Posterior vena cava (tissue), 2 donors: ENCODE measurements at regions of chr4 and their contacts with region 1.

Region 1: DNA sequence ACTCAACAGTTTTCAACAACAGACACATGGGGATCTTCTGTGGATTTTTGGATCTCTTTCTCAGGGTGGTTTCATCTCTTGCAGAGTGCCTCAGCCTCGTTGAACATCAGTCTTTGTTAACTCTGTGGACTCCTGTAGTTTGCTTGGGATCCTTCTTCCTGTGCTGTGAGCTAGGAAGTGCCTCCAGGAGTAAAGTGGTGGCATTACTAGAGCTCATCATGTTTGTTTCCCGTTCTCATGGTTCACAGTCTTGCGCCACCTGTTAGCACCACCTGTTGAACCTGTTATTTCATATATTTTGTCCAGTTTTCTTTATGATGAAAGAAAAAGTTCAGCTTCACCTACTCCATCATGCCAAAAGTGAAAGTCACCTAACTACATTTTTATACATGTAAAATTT is 27.5 kb upstream of the NDUFC1 start:
- DNase-seq: no peak

Region 2: DNA sequence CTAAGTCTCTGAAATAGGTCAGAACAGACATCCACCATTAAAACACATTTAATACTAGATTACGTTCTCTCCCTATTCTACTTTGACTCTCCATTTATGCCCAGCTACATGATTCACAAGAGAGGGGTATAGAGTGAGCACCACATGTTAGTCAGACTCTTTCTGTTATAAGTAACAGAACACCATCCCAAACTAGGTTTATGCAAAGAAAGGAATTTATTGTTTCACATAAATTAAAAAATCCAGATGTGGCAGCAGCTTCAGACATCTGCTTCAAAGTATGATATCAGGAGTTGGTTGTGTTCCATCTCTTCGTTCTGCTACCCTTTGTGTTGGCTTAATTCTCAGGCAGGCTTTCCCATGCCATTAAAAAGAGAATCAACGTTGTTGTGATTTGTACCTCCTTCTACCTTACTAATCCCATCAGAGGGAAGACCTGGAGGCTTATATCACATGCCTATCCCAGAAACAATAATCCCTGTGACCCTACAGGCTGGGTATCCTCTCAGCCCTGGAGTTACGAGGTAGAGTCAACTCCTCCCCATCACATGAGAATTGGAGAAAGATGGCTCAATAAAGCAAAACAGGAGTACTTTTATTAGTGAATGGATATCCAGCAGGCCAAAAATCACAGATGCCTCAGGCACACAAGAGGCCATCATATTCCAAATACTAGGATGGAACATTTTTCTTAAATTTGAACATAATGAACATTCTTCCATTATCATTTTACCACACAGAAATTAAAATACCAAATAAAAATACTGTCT is 1250.8 kb before region 1 on chr4:
- intact Hi-C with region 1: no loop called
- DNase-seq: no peak

Region 3: GRCh38 chr4:139273835-139274234 is 55.9 kb before region 1 on chr4:
- intact Hi-C with region 1: loop called in 1 of 2 experiments (anchors 2 kb)
- DNase-seq: no peak